Vagina (tissue), 2 donors: ENCODE measurements at regions of chr4 and their contacts with region 1.

Region 1: DNA sequence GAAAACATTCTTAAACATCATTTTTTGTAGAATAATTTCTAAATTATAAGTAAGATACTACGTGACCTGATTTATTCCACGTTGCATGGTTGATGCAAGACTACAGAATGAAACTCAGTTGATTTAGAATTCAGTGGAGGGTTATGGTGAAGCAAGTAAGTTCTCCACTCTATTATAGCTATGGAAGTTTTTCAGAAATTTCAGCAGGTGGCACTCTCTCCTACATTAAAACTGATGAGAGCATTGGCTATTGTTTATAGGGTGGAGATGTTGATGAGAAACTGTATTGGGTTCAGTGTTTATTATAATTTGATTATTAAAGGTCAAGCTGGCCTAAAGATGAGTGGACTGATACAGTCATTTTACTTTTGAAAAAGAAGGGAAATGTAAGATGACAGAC is 88.0 kb downstream of the FNIP2 start:
- DNase-seq: no peak
- H3K4me3 ChIP-seq: no peak overlapping the region
- H3K27ac ChIP-seq: no peak overlapping the region
- H3K4me1 ChIP-seq: no peaks in the 10 kb centered on the region
- H3K27me3 ChIP-seq: no peaks in the 10 kb centered on the region
- CTCF ChIP-seq: peak; percentile 32 to 53 (median 32)
- POLR2A ChIP-seq: no peak

Region 2: DNA sequence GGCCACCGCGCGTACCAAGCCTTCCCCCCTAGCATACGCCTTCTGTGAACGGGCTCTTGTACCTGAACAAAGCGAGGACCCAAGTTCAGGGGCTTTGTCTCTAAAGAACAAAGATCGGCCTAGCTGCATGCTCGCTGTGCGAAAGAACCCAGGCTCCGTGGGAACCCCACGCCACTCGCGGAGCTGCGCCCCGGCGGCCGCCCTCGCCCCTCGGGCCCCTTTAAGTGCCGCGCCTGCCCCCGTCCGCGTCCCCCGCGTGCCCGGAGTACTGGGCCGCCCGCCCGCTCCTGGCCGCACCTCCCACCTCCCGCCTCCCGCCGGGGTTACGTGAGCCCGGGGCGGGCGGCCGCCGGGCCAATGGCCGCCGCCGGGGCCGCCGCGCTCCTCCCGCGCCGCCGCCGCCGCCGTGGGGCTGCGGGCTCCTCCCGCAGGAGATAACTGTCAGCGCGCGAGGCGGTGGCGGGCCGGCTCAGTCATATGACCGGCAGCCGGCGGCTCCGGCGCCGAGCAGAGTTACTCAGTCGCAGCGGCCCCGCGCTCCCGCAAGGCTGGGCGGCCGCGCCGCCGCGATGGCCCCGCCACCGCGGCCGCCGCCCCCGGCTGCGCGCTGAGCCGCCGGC is 88.2 kb before region 1 on chr4 and contains the start of gene FNIP2:
- intact Hi-C with region 1: no loop called
- DNase-seq: no peak
- H3K4me3 ChIP-seq: peak within 1 kb of the TSS; percentile 93 to 94
- H3K27ac ChIP-seq: peak within 1 kb of the TSS; percentile 92
- H3K4me1 ChIP-seq: peaks cover 48% of the 10 kb centered on the region
- H3K27me3 ChIP-seq: no peaks in the 10 kb centered on the region
- CTCF ChIP-seq: no peak
- POLR2A ChIP-seq: peak in 1 of 2 donors; percentile 37
- total RNA-seq, gene FNIP2: 25.3 TPM

Region 3: GRCh38 chr4:159175085-159175988 is 318.5 kb after region 1 on chr4:
- intact Hi-C with region 1: loop called (anchors 10 kb)
- DNase-seq: no peak
- H3K4me3 ChIP-seq: no peak overlapping the region
- H3K27ac ChIP-seq: peak overlapping the region; percentile 22
- H3K4me1 ChIP-seq: peaks cover 31% of the 10 kb centered on the region
- H3K27me3 ChIP-seq: no peaks in the 10 kb centered on the region
- CTCF ChIP-seq: peak; percentile 71 to 88 (median 80)
- POLR2A ChIP-seq: no peak

Region 4: DNA sequence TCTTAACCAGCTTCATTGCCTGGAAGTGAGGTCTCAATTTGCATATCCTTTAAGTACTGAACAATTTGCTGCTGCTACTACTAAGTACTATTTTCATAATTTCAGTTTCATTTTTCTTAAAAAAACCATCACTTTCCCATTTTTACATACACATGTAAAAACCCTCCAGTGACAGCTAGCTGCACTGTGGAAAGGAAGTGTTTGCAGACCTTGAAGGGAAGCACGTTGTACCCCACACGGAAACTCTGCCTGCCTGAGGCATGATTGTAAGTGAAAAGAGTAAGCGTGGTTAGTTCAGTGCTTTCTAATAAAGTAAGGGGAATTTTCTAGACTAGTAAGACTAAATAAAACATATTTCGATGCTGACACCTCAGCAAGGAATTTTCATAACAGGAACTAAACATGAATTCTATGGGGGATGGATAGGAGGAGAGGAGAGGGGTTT is 349.6 kb after region 1 on chr4:
- intact Hi-C with region 1: loop called (anchors 10 kb)
- DNase-seq: no peak
- H3K4me3 ChIP-seq: no peak overlapping the region
- H3K27ac ChIP-seq: no peak overlapping the region
- H3K4me1 ChIP-seq: peaks cover 13% of the 10 kb centered on the region
- H3K27me3 ChIP-seq: no peaks in the 10 kb centered on the region
- CTCF ChIP-seq: no peak
- POLR2A ChIP-seq: no peak